Calu3 (cell line): ENCODE measurements at regions of chr3 and their contacts with region 1.

Region 1: DNA sequence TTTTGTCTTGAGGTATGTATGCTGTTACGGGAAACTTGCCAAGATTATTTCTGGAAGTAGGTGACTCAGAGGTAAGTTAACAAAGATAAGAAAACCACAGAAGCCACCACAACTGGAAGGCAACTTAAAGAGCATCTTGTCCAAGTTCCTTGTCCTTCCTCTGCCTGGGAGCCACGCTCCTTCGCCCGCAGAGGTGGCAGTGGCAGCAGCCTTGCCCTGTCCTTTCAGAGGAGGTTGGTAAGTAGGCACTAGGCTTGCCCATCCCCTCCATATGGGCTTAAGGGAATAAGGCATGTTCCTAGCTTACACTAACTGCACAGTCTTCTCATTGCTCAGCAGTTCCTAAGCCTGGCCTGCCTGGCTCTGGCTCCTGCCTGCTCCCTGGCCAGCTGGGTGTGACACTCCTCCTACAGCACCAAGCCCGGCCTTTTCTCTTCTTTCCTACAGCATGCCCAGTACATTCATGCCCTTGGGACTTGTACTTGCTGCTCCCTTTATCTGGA is 48.0 kb upstream of the RAB6B start:
- DNase-seq: peak; percentile 82
- H3K4me3 Mint-ChIP-seq: no peak overlapping the region
- H3K27ac Mint-ChIP-seq: peak overlapping the region; percentile 10
- H3K4me1 Mint-ChIP-seq: peaks cover 51% of the 10 kb centered on the region
- H3K27me3 Mint-ChIP-seq: peaks cover 76% of the 10 kb centered on the region
- CTCF ChIP-seq: no peak

Region 2: DNA sequence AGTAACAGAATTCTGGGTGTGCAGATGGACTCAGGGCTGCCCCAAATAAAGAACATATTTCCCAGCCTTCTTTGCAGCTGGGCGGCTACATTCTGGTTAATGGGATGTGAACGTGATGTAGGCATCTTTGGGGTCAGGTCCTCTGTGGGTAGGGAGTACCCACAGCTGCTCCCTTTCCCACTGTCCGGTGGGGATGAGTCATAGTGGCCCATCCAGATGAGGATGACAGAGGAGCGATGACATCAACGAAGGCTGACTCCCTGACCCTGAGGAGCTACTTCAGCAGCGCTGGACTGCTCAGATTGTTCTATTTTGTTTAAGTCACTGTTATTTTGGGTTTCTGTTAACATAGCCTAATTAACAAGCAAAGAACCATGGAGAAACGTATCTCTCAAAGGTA is 100.1 kb before region 1 on chr3:
- CTCF ChIA-PET with region 1: no interaction called
- intact Hi-C with region 1: no loop called
- DNase-seq: no peak
- H3K4me3 Mint-ChIP-seq: no peak overlapping the region
- H3K27ac Mint-ChIP-seq: no peak overlapping the region
- H3K4me1 Mint-ChIP-seq: no peaks in the 10 kb centered on the region
- H3K27me3 Mint-ChIP-seq: peaks cover 55% of the 10 kb centered on the region
- CTCF ChIP-seq: no peak

Region 3: GRCh38 chr3:133924041-133924440 is 19.6 kb before region 1 on chr3:
- CTCF ChIA-PET with region 1: no interaction called
- intact Hi-C with region 1: no loop called
- DNase-seq: no peak
- H3K4me3 Mint-ChIP-seq: no peak overlapping the region
- H3K27ac Mint-ChIP-seq: no peak overlapping the region
- H3K4me1 Mint-ChIP-seq: no peaks in the 10 kb centered on the region
- H3K27me3 Mint-ChIP-seq: peaks cover 95% of the 10 kb centered on the region
- CTCF ChIP-seq: no peak

Region 4: GRCh38 chr3:133988631-133989161 is 45.0 kb after region 1 on chr3:
- CTCF ChIA-PET with region 1: no interaction called
- intact Hi-C with region 1: loop called (anchors 5 kb)
- DNase-seq: no peak
- H3K4me3 Mint-ChIP-seq: no peak overlapping the region
- H3K27ac Mint-ChIP-seq: no peak overlapping the region
- H3K4me1 Mint-ChIP-seq: peaks cover 31% of the 10 kb centered on the region
- H3K27me3 Mint-ChIP-seq: peaks cover 81% of the 10 kb centered on the region
- CTCF ChIP-seq: no peak

Region 5: DNA sequence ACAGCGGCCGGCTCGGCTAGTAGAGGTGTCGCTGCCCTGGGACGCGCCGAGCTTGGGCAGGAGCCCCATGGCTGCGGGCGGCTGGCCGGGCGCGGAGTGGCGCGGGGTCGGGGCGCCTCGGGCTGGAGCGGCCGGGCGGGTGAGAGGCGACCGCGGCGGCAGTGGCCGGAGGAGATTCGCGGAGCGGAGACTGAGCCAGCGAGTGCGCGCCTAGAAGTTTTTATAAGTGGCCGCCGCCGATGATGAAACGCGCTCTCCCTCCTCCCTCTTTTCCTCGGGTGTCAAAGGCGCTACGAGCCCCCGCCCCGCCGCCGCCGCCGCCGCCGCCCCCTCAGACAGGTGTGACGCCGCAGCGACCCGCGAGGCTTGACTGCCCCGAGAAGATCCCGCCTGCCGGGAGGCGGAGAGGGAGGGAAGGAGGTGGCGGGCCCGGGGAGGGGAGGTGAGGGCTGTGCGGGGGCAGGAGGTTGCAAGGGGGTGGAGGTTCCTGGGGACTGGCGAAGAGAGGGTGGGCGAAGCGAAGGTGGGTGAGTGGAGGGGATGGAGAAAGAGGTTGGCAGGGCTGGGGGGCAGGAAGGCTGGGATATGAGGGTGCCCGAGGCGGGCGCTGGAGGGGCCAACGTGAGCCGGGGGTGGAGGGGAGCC is 86.2 kb after region 1 on chr3 and contains the start of gene SLCO2A1:
- CTCF ChIA-PET with region 1: no interaction called
- intact Hi-C with region 1: loop called (anchors 2 kb)
- DNase-seq: peak; percentile 38
- H3K4me3 Mint-ChIP-seq: peak within 1 kb of the TSS; percentile 71
- H3K27ac Mint-ChIP-seq: no peak within 1 kb of the TSS
- H3K4me1 Mint-ChIP-seq: peaks cover 13% of the 10 kb centered on the region
- H3K27me3 Mint-ChIP-seq: peaks cover 100% of the 10 kb centered on the region
- CTCF ChIP-seq: no peak
- total RNA-seq, gene SLCO2A1: not detected in 2 replicates

Region 6: GRCh38 chr3:134094491-134094890 is 150.8 kb after region 1 on chr3:
- CTCF ChIA-PET with region 1: no interaction called
- intact Hi-C with region 1: no loop called
- DNase-seq: no peak
- H3K4me3 Mint-ChIP-seq: no peak overlapping the region
- H3K27ac Mint-ChIP-seq: no peak overlapping the region
- H3K4me1 Mint-ChIP-seq: no peaks in the 10 kb centered on the region
- H3K27me3 Mint-ChIP-seq: no peaks in the 10 kb centered on the region
- CTCF ChIP-seq: no peak